ENCODE measurements at regions of chr4 and their contacts with region 1.

Region 1: GRCh38 chr4:88297725-88298454 is 13.5 kb upstream of the PPM1K start:
- DNase-seq: no peak

Region 2: GRCh38 chr4:88341227-88342192 is 43.6 kb after region 1 on chr4:
- intact Hi-C with region 1: loop called (anchors 5 kb)
- DNase-seq: no peak

Measured in cardiac septum (tissue), 1 donor.